Lower leg skin (tissue), 4 donors: ENCODE measurements at regions of chr10 and their contacts with region 1.

Region 1: GRCh38 chr10:15378569-15378968 is 7.5 kb upstream of the FAM171A1 start:
- DNase-seq: no peak
- H3K4me3 ChIP-seq: no peak overlapping the region
- CTCF ChIP-seq: no peak
- POLR2A ChIP-seq: no peak

Region 2: GRCh38 chr10:15245530-15245929 is 133.0 kb before region 1 on chr10:
- intact Hi-C with region 1: no loop called
- DNase-seq: no peak
- H3K4me3 ChIP-seq: no peak overlapping the region
- CTCF ChIP-seq: no peak
- POLR2A ChIP-seq: no peak

Region 3: GRCh38 chr10:15365690-15366089 is 12.9 kb before region 1 on chr10:
- intact Hi-C with region 1: loop called (anchors 1 kb)
- DNase-seq: no peak
- H3K4me3 ChIP-seq: no peak overlapping the region
- CTCF ChIP-seq: no peak
- POLR2A ChIP-seq: no peak